Cardiac septum (tissue), 1 donor: ENCODE measurements at regions of chr10 and their contacts with region 1.

Region 1: GRCh38 chr10:16436758-16437539 is at the start of gene PTER:
- DNase-seq: peak; percentile 99
- total RNA-seq, gene PTER: 6.0 TPM

Region 2: DNA sequence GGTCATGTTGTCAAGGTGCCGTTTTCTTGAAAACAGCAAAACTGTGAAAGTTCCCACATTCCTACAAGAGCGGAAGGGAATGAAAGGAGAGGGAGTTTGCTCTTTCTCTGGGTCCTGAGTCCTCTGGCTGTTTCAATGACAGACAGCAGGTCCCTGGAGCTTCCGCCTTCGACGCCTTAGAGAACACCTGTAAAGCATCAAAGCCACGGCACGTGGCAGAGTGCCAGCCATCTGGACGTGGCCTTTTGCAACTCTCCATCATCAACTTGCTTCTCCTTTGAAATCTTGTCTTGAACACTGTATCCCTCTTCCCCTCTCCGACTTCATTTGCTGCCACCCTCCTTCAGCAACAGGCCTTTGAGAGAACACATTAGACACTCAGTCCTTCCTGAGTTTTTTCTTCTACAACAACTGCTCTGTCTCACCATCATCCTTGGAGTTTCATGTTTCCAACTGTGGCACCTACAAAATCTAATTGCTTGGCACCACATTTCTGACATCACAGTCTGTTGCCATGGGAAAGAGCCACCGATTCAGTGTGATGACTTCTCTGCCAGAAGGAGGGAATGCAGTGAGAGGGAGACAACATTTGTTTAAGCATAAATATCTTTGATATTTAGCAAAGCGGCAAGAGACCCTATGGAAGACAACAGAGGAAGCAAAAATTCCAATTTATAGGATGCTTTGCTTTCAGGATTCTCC is 205.1 kb before region 1 on chr10:
- intact Hi-C with region 1: no loop called
- DNase-seq: no peak

Region 3: GRCh38 chr10:16817125-16818019 is 380.4 kb after region 1 on chr10 and contains the start of gene RSU1:
- intact Hi-C with region 1: loop called (anchors 10 kb)
- DNase-seq: peak; percentile 100
- total RNA-seq, gene RSU1: 45.6 TPM